Left ventricle myocardium inferior (tissue), 1 donor: ENCODE measurements at regions of chr16 and their contacts with region 1.

Region 1: DNA sequence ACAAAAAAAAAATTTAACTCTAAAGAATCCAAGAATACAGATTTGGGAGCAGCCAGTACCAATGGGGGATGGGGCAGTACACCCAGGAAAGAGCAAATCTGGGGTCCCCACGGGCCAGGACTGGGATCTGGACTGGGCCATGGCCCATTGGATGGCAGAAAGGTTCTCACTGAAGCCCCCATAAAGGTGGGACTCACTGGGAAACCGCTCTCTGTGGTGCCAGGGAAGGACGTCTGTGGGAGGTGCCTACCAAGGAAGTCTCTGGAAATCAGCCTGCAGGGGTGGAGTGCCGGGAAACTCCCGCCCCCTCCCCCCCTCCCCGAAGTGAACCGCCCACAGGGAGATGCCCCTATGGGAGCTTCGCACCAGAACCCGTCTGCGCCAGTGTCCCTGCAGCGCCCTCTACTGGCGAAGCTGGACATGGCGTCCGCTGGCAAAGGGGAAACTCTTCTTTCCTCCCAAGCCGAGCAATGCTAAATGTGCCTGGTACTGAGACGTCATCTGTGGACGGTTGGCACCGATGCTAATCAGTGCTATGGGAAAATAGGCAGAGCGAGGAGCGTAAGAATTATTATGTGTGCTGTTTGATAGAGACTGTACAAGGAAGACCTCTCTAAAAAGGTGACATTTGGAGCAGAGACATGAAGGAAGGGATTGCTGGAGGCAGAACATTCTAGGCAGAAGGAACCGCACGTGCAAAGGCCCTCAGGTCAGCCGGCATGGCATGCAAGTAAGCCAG is 671.1 kb downstream of the WWOX start:
- DNase-seq: peak; percentile 72
- H3K4me3 ChIP-seq: no peak overlapping the region
- H3K27ac ChIP-seq: peak overlapping the region; percentile 28
- H3K4me1 ChIP-seq: peaks cover 11% of the 10 kb centered on the region
- H3K27me3 ChIP-seq: no peaks in the 10 kb centered on the region
- CTCF ChIP-seq: peak; percentile 89

Region 2: DNA sequence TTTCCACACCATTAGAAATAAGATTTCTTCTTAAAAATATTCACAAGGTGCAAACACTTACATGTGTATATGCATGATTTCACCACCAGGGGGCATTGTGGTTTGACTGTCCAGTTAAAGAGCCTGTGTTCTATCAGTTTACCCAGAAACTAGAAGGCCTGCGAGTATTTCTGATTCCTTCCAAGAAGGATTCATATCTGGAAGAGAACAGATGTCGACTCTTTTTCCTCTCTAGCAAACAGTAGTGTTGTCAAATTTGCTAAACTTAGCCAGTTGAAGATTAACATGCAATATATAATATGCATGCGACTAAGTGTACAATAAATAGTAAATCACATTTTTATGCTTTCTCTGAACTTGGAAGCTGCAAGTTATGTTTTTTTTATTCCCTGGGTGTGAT is 266.9 kb before region 1 on chr16:
- intact Hi-C with region 1: loop called (anchors 5 kb)
- DNase-seq: no peak
- H3K4me3 ChIP-seq: no peak overlapping the region
- H3K27ac ChIP-seq: no peak overlapping the region
- H3K4me1 ChIP-seq: peaks cover 26% of the 10 kb centered on the region
- H3K27me3 ChIP-seq: no peaks in the 10 kb centered on the region
- CTCF ChIP-seq: peak; percentile 89

Region 3: DNA sequence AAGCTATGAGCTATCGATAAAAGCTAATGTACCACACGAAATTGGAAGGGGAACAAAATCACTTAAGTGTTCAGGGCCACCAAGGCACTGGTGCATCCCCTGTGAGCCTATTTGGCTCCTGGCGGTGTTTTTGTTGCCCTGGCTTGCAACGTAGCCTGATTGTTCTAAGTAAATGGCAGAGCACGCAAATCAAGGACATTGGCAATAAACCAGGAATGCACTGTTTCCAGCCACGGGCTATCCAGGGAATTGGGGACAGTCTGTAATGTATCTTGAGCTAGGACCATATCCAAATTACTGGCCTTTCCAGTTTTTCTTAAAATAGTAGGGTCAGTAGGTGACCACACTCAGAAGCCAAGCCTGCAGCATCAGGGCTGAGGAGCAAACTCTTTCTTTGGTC is 96.0 kb after region 1 on chr16:
- intact Hi-C with region 1: no loop called
- DNase-seq: peak; percentile 16
- H3K4me3 ChIP-seq: peak overlapping the region; percentile 3
- H3K27ac ChIP-seq: peak overlapping the region; percentile 40
- H3K4me1 ChIP-seq: peaks cover 18% of the 10 kb centered on the region
- H3K27me3 ChIP-seq: no peaks in the 10 kb centered on the region
- CTCF ChIP-seq: no peak